ENCODE measurements at regions of chr15 and their contacts with region 1.

Region 1: GRCh38 chr15:85889956-85890619 is 95.4 kb upstream of the KLHL25 start:
- DNase-seq: no peak
- H3K4me3 ChIP-seq: no peak overlapping the region
- CTCF ChIP-seq: no peak
- POLR2A ChIP-seq: no peak

Region 2: DNA sequence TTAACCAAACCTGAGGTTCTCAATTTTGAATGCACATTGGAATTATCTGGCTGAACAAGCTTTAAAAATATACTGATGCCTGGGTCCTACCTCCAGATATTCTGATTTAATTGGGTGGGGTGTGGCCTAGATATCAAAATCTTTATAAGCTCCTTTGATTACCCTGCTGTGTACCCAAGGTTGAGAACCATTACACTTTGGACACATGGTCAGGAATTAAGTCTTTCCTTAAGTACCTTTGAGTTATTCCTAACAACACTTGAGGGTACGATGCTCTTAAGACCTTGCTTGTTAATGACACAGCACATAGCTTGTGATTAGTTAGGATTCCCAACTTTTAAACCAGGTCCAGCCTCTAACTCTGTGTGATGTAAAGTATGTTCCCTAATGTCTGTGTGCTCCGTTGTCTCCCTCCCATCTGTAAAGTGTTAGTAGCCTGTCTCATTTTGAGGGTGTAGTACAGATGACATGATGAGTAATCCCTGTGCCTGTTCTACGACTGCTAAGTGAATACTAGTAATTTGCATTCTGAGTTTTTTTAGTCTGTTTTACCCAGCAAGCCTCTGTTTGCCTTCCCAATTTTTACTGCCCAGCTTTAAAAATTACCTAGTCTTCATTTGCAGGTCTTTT is 250.2 kb before region 1 on chr15:
- intact Hi-C with region 1: no loop called
- DNase-seq: no peak
- H3K4me3 ChIP-seq: no peak overlapping the region
- CTCF ChIP-seq: no peak
- POLR2A ChIP-seq: no peak

Region 3: DNA sequence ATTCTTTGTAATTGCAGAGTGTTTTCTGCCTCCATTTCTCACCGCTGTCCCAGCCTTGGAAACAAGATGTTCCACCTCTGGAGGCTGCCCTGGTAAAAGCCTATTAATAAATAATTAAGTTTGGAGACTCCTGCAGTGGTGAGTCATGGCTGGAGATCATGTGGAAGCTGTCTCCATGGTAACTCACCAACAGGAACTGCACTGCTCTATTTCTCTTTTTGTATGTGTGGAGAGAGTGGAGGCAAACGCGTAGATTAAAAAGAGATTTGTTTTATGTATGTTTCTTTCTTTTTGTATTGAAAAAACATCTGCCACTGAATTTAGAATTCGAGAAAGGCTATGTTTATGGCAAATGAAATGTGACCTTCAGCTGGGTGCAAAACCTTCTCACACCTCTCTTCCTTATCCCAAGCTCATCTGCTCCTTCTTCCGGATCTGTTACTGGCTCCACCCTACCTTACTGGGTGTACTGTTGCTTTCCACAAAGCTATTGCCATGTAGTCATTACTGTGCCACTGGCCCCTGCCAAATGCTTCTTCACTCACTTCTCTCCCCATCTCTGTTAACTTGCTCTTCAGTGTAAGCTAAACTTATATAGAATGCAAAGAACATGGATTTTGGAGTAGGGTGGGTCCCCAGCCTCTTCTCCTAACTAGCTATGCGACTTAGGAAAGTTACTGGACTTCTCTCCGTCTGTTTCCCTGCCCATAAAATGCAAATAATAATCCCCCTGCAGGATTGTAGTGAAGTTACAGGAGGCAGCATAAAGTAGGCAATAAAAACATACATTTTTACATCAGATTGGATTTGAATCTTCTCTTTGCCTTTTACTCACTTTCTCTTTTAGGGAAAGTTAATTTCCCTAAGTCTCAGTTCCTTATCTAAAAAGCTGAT is 1588.0 kb after region 1 on chr15:
- intact Hi-C with region 1: loop called (anchors 5 kb)
- DNase-seq: peak in 1 of 2 donors; percentile 36
- H3K4me3 ChIP-seq: no peak overlapping the region
- CTCF ChIP-seq: no peak
- POLR2A ChIP-seq: no peak

Measured in lower leg skin (tissue), 4 donors.